ENCODE measurements at regions of chr7 and their contacts with region 1.

Region 1: DNA sequence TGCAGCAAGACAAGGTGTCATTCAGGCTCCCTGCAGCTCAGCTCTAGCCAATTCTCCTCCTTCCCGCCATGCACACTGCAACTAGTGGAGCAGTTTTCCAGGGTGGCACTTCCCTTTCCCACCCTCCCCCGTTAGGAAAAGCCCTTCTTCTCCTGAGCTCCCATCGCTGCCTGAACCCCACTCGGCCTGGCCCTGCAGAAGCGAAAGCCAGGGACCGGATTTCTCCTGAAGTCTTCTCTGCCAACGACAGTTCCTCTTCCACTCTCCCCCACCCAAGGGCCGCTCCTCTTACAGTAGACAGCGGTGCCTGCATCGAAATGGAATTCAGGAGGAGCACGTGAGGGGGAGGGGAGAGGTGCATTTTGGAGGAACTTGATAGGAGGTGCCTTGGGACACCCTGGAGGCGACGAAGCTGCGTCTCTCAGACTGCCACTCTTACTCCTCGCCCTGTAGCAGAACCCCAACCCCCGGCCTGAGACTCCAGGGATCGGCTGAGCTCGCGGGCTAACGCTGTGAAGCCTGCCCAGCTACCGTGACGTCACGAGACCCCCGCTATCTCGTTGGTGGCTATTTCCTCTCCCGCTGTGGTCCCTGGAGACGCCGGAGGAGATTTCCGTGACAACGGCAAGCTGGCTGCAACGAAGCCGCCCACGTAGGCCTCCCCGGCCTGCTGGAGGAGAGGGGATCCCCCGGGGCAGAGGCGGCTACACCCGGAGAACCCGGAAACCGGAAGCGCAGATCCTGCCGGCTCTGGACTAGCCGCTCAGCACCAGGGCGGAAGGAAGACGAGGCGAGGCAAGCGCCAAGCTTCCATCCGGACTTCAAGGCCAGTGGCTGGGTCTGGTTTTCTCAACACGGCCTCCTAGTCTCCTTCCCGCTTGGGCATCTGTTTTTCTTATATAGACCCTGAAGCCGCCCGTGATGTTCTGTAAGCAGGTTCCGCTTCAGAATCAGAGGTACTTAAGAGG is 109.7 kb downstream of the RALA start:
- DNase-seq: peak; percentile 98
- ATAC-seq: peak; percentile 97 to 98
- H3K4me3 ChIP-seq: peak overlapping the region; percentile 60
- H3K27ac ChIP-seq: peak overlapping the region; percentile 43
- H3K4me1 ChIP-seq: peaks cover 2% of the 10 kb centered on the region
- H3K27me3 ChIP-seq: no peaks in the 10 kb centered on the region

Region 2: GRCh38 chr7:39623018-39623731 is 109.9 kb before region 1 on chr7 and contains the start of gene RALA:
- intact Hi-C with region 1: loop called in 1 of 4 experiments (anchors 5 kb)
- DNase-seq: peak; percentile 95 to 98 (median 97)
- ATAC-seq: peak; percentile 99
- H3K4me3 ChIP-seq: peak within 1 kb of the TSS; percentile 76
- H3K27ac ChIP-seq: peak within 1 kb of the TSS; percentile 95
- H3K4me1 ChIP-seq: peaks cover 3% of the 10 kb centered on the region
- H3K27me3 ChIP-seq: no peaks in the 10 kb centered on the region
- total RNA-seq, gene RALA: 21.0 to 23.9 (median 22.4) TPM